AG04450 (cell line): ENCODE measurements at regions of chr1 and their contacts with region 1.

Region 1: GRCh38 chr1:11262171-11263049 is at the start of gene MTOR:
- DNase-seq: peak; percentile 100
- H3K4me3 ChIP-seq: peak within 1 kb of the TSS; percentile 88
- H3K27ac ChIP-seq: peak within 1 kb of the TSS; percentile 70
- H3K27me3 ChIP-seq: no peaks in the 10 kb centered on the region
- CTCF ChIP-seq: peak; percentile 24
- polyA plus RNA-seq, gene MTOR: 27.7 and 30.7 TPM in 2 replicates

Region 2: DNA sequence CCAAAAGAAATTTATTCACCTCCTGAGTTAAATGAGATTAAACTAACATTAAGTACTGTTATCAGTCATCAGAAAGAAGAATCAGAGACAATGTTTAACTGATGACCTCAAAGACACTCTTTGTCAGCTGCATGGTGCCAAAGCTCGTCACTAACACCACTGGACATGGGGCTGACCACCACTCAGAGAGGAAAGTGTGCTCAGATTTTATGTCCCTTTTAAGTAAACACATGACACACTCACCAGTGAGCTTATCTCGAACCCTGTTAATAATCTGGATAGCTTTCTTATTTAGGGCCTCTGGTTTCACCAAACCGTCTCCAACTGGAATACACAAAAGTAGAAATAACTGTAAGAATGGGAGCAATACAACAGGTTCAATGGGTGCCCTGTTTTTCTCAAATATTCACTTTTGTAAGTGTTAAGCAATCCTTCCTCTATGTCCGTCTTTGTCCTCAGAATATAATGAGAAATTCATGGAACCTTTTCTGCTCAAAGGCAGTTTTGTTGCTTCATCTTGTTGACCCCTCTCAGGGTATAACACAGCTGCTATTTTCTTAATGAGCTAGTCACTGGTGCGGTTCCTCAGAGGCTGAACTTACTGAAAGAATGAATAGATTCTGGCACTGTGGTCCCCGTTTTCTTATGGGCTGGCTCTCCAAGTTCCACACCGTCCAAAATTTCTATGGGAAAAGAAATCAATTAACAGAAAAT is 153.2 kb before region 1 on chr1:
- CTCF ChIA-PET with region 1: no interaction called
- POLR2A ChIA-PET with region 1: no interaction called
- DNase-seq: no peak
- H3K4me3 ChIP-seq: no peak overlapping the region
- H3K27ac ChIP-seq: no peak overlapping the region
- H3K27me3 ChIP-seq: no peaks in the 10 kb centered on the region
- CTCF ChIP-seq: no peak

Region 3: DNA sequence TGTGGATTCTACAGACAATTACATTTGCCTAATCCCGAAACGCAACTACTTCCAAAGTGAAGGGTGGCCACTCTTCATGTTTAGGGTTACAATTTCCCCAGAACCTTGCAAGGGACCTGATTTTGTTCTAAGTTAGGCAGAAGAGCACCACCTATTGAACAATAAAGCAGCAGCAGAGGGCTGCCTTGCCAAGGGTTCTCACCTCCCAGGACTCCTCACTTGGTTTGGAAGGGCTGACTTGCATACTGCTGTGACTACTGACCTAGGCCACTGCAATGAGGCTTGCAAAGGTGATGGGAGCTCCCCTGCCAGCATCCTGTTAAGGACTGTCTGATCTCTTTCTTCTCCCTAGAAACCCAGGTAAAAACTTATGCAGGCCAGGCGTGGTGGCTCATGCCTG is 14.3 kb before region 1 on chr1:
- CTCF ChIA-PET with region 1: interaction called, 30 read pairs
- POLR2A ChIA-PET with region 1: interaction called, 5 read pairs
- DNase-seq: no peak
- H3K4me3 ChIP-seq: no peak overlapping the region
- H3K27ac ChIP-seq: no peak overlapping the region
- H3K27me3 ChIP-seq: no peaks in the 10 kb centered on the region
- CTCF ChIP-seq: no peak